Lower leg skin (tissue), 4 donors: ENCODE measurements at regions of chr11 and their contacts with region 1.

Region 1: DNA sequence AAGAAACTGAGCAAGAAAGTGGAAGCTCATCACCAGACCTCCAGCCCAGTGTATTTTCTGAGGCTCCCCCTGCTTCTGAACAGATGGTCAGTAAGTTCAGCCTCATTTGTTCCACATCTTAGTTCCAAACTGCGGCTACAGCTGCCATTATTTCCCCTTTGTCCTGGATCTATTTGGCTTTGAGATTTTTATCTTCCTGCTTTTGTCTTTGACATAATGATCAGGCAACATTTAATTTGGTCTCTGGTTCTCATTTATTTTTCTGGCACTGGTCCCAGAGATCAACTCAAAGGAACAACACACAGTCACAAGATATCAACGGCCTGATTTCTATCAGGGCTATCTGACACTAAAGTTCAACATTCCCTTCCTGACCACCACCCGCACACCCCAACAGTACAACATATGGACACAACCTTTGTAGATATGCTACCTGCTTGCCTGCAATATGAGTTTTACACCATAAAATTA is 137.5 kb downstream of the FAM76B start:
- DNase-seq: no peak
- H3K4me3 ChIP-seq: no peak overlapping the region
- CTCF ChIP-seq: no peak
- POLR2A ChIP-seq: no peak

Region 2: GRCh38 chr11:94271885-94272372 is 1380.1 kb before region 1 on chr11:
- intact Hi-C with region 1: loop called (anchors 10 kb)
- DNase-seq: no peak
- H3K4me3 ChIP-seq: no peak overlapping the region
- CTCF ChIP-seq: no peak
- POLR2A ChIP-seq: no peak

Region 3: GRCh38 chr11:95668131-95668530 is 16.1 kb after region 1 on chr11:
- intact Hi-C with region 1: no loop called
- DNase-seq: no peak
- H3K4me3 ChIP-seq: no peak overlapping the region
- CTCF ChIP-seq: no peak
- POLR2A ChIP-seq: no peak

Region 4: GRCh38 chr11:96215110-96215782 is 563.2 kb after region 1 on chr11:
- intact Hi-C with region 1: no loop called
- DNase-seq: no peak
- H3K4me3 ChIP-seq: no peak overlapping the region
- CTCF ChIP-seq: no peak
- POLR2A ChIP-seq: no peak